Activated CD4-positive, alpha-beta T cell treated with anti-CD3 and anti-CD28 coated beads for 36 hours (primary cell): ENCODE measurements at regions of chr22 and their contacts with region 1.

Region 1: DNA sequence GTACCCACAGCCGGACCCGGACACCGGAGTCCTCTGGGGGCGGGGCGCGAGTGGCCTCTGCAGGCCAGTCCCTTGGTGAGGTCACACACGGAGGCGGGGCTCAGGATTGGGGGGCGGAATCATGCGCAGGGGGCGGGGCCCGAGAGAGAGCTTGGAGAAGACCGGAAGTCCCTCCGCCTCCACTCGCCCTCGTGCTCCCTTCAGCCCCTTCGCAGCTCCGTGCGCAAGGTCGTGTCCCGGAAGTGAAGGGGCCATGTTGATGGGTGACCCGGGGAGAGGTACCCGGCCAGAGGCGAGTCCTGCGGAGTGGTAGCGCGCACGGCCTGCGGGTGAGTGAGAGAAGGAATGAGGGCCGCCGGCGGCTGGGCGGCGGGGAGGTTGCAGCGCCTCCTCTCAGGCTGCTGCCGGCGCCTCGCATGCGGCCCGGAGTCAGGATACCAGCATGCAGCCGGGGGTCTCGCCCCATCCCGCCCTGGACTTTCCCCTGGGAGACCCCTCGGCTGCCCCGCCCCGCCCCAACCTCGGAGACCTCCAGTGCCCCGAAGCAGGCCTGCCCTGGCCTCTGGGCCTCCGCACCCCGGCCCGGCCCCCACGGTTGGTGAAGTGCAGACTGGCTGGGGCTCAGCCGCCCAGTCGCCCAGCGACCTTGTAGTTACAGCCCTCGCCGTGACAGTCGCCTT is at the start of gene MIEF1:
- DNase-seq: peak; percentile 98
- ATAC-seq: peak; percentile 98
- H3K4me3 Mint-ChIP-seq: peak within 1 kb of the TSS; percentile 76
- H3K27ac Mint-ChIP-seq: peak within 1 kb of the TSS; percentile 94
- H3K4me1 Mint-ChIP-seq: peaks cover 35% of the 10 kb centered on the region
- H3K27me3 Mint-ChIP-seq: no peaks in the 10 kb centered on the region
- total RNA-seq, gene MIEF1: 43.2 to 44.9 TPM

Region 2: DNA sequence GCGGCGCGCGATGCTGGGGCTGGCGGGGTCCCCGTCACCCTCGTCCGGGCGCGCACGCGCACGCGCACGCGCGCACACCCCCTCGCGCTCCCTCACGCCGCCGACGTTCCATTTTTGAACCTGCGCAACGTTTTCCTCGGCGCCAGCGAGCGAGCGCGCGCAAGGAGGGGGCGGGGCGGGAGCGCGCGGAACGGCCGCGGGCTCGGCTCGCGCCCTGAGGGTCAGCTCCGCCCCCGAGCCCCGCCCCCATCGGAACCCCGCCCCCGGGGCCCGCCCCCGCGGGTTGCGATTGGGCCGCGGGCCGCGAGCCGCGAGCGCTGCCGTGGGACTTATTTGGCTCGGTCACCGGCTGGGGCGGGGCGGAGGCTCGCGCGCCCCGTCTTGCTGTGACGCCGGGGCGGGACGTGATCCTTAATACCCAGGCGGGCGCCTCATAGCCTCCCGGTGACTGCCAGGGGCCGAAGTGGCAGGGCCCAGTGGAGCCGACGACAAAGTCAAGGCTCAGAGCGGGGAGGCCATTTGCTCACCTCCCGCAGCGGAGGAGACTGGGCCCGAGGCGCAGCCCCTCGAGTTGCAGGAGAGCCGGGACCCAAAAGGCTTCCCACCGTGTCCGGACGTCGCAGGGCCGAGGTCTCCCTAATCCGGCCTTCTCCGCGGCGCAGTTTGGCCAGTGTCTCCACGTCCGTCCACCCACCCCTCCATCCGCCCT is 349.6 kb before region 1 on chr22 and contains the start of gene CBX7:
- CTCF ChIA-PET with region 1: no interaction called
- POLR2A ChIA-PET with region 1: no interaction called
- intact Hi-C with region 1: loop called in 1 of 2 experiments (anchors 2 kb)
- DNase-seq: peak; percentile 95
- ATAC-seq: peak; percentile 83
- H3K4me3 Mint-ChIP-seq: peak within 1 kb of the TSS; percentile 76
- H3K27ac Mint-ChIP-seq: peak within 1 kb of the TSS; percentile 72
- H3K4me1 Mint-ChIP-seq: peaks cover 40% of the 10 kb centered on the region
- H3K27me3 Mint-ChIP-seq: peaks cover 13% of the 10 kb centered on the region
- total RNA-seq, gene CBX7: 19.9 to 20.3 TPM

Region 3: GRCh38 chr22:39395936-39396796 is 106.1 kb before region 1 on chr22:
- CTCF ChIA-PET with region 1: interaction called, 3 read pairs
- POLR2A ChIA-PET with region 1: interaction called, 5 read pairs
- intact Hi-C with region 1: loop called in 1 of 2 experiments (anchors 1 kb)
- DNase-seq: no peak
- ATAC-seq: no peak
- H3K4me3 Mint-ChIP-seq: no peak overlapping the region
- H3K27ac Mint-ChIP-seq: no peak overlapping the region
- H3K4me1 Mint-ChIP-seq: peaks cover 9% of the 10 kb centered on the region
- H3K27me3 Mint-ChIP-seq: no peaks in the 10 kb centered on the region

Region 4: GRCh38 chr22:39490135-39490798 is 12.0 kb before region 1 on chr22:
- CTCF ChIA-PET with region 1: interaction called, 11 read pairs
- POLR2A ChIA-PET with region 1: interaction called, 3 read pairs
- intact Hi-C with region 1: loop called (anchors 1 kb)
- DNase-seq: peak; percentile 89
- ATAC-seq: peak; percentile 100
- H3K4me3 Mint-ChIP-seq: no peak overlapping the region
- H3K27ac Mint-ChIP-seq: no peak overlapping the region
- H3K4me1 Mint-ChIP-seq: peaks cover 7% of the 10 kb centered on the region
- H3K27me3 Mint-ChIP-seq: no peaks in the 10 kb centered on the region

Region 5: GRCh38 chr22:40044102-40044869 is 542.0 kb after region 1 on chr22:
- CTCF ChIA-PET with region 1: no interaction called
- POLR2A ChIA-PET with region 1: no interaction called
- intact Hi-C with region 1: loop called in 1 of 2 experiments (anchors 1 kb)
- DNase-seq: peak; percentile 98
- ATAC-seq: peak; percentile 91
- H3K4me3 Mint-ChIP-seq: peak overlapping the region; percentile 87
- H3K27ac Mint-ChIP-seq: peak overlapping the region; percentile 99
- H3K4me1 Mint-ChIP-seq: peaks cover 24% of the 10 kb centered on the region
- H3K27me3 Mint-ChIP-seq: peaks cover 2% of the 10 kb centered on the region